Activated naive CD4-positive, alpha-beta T cell treated with anti-CD3 and anti-CD28 coated beads for 36 hours (primary cell): ENCODE measurements at regions of chr13 and their contacts with region 1.

Region 1: GRCh38 chr13:29362849-29363604 is 232.5 kb downstream of the SLC7A1 start:
- DNase-seq: peak; percentile 61
- H3K4me3 Mint-ChIP-seq: no peak overlapping the region
- H3K27ac Mint-ChIP-seq: no peak overlapping the region
- H3K4me1 Mint-ChIP-seq: peaks cover 3% of the 10 kb centered on the region
- H3K27me3 Mint-ChIP-seq: peaks cover 6% of the 10 kb centered on the region

Region 2: DNA sequence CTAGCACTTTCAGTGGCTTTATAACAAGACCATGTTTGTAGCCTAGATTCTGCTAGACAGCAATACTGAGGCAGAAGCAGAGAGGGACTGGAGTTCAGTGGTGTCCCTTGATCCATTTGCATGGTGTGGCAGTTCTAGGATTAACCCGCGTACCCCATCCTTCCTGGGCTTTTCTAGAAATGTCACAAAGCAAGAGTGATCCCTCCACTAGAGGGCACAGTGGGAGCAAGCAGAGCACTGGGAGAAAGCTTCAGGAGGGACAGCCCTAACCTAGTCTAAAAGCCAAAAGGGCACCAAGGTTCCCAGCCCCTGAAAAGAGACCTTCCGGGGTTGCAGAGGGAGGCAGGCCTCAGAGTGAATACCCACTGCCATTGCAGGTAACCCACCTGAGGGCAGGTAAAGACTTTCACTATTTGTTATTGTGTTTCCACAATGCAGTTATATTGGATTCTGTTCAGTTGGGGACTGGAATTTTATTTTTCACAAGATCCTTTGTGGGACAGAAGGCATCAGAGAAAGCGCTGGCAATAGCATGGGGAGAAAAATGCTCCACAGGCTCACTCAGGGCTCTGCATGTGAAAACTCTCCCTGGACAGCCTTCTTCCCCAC is 1038.7 kb before region 1 on chr13:
- CTCF ChIA-PET with region 1: no interaction called
- intact Hi-C with region 1: loop called (anchors 10 kb)
- DNase-seq: peak; percentile 79
- H3K4me3 Mint-ChIP-seq: no peak overlapping the region
- H3K27ac Mint-ChIP-seq: no peak overlapping the region
- H3K4me1 Mint-ChIP-seq: no peaks in the 10 kb centered on the region
- H3K27me3 Mint-ChIP-seq: no peaks in the 10 kb centered on the region

Region 3: DNA sequence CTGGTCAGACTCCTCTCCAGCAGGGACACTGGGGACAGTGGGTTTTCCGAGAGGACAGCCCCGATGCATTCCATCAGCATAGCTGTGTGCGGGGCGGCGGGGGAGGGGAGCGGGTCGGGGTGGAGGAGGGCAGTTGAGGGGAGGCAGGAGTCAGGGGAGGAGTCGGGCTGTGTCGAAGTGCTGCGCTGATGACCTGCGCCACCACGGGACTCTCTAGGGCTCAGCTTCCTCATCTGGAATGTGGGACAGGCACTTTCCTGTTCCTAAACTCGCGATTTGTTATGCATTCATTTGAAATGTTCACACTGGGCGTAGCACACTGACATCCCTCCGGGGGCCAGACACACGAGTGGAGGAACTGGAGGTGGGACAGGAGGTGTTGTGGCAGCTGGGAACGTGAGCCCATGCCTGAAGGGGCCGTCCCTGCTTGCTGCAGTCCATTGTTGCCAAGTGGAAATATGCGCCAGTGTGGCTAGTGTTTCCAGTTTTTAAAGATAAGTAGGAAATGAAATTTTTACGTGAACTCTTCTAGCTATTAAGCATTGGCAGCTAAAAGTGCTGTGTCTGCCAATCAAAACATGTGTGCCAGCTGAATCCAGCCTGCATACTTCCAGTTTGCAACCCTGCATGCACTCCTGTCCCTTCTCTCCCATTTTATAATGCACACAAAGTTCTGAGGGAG is 911.4 kb before region 1 on chr13:
- CTCF ChIA-PET with region 1: no interaction called
- intact Hi-C with region 1: no loop called
- DNase-seq: no peak
- H3K4me3 Mint-ChIP-seq: no peak overlapping the region
- H3K27ac Mint-ChIP-seq: no peak overlapping the region
- H3K4me1 Mint-ChIP-seq: no peaks in the 10 kb centered on the region
- H3K27me3 Mint-ChIP-seq: peaks cover 4% of the 10 kb centered on the region

Region 4: GRCh38 chr13:28819735-28820098 is 543.3 kb before region 1 on chr13:
- CTCF ChIA-PET with region 1: no interaction called
- intact Hi-C with region 1: loop called (anchors 1 kb)
- DNase-seq: peak; percentile 53
- H3K4me3 Mint-ChIP-seq: no peak overlapping the region
- H3K27ac Mint-ChIP-seq: no peak overlapping the region
- H3K4me1 Mint-ChIP-seq: peaks cover 2% of the 10 kb centered on the region
- H3K27me3 Mint-ChIP-seq: peaks cover 52% of the 10 kb centered on the region

Region 5: GRCh38 chr13:29081036-29081435 is 282.0 kb before region 1 on chr13:
- CTCF ChIA-PET with region 1: no interaction called
- intact Hi-C with region 1: loop called (anchors 1 kb)
- DNase-seq: peak; percentile 15
- H3K4me3 Mint-ChIP-seq: no peak overlapping the region
- H3K27ac Mint-ChIP-seq: no peak overlapping the region
- H3K4me1 Mint-ChIP-seq: peaks cover 8% of the 10 kb centered on the region
- H3K27me3 Mint-ChIP-seq: no peaks in the 10 kb centered on the region

Region 6: GRCh38 chr13:29230299-29230845 is 132.7 kb before region 1 on chr13:
- CTCF ChIA-PET with region 1: no interaction called
- intact Hi-C with region 1: no loop called
- DNase-seq: no peak
- H3K4me3 Mint-ChIP-seq: no peak overlapping the region
- H3K27ac Mint-ChIP-seq: no peak overlapping the region
- H3K4me1 Mint-ChIP-seq: no peaks in the 10 kb centered on the region
- H3K27me3 Mint-ChIP-seq: peaks cover 4% of the 10 kb centered on the region